ENCODE measurements at regions of chr3 and their contacts with region 1.

Region 1: DNA sequence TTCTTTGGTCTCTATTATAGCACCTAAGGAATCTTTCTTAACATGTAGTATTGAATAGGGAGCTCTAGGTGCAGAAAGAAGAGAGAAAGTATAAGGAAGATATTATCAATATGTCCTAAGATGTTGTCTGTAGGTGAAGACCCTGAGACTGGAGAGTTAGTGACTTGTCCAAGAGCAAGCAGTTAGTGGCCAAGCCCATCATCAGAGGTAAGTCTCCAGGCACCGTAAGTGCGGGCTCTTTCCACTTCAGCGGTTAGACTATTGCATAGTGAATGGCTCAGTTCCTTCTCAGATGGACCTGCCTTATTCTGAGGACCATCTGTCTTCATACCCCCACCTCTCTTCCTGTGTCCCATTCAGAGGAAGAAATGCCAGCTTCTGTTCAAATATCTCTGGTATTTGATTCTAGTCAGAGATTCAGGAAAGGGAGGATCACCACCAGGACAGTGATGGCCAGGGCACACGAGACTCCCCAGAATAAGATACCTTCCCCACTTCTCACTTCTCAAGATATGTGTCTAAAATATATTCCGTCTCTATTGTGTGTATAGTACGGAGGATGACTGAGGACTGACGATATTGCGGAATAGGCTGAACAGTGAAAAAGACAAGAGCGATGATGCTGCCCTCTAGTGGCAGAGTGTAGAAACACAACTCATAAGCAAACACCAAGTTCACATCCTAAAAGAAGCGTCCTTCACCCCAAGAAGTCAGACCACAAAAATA is 19.1 kb upstream of the ADGRG7 start:
- DNase-seq: peak; percentile 30
- ATAC-seq: peak; percentile 89 to 91

Region 2: GRCh38 chr3:99833617-99834205 is 756.6 kb before region 1 on chr3:
- intact Hi-C with region 1: loop called (anchors 2 to 10 kb)
- DNase-seq: no peak
- ATAC-seq: peak in 1 of 2 donors; percentile 19

Region 3: GRCh38 chr3:100316641-100317069 is 273.6 kb before region 1 on chr3:
- intact Hi-C with region 1: loop called in 1 of 2 experiments (anchors 2 kb)
- DNase-seq: peak; percentile 37
- ATAC-seq: peak; percentile 84

Region 4: DNA sequence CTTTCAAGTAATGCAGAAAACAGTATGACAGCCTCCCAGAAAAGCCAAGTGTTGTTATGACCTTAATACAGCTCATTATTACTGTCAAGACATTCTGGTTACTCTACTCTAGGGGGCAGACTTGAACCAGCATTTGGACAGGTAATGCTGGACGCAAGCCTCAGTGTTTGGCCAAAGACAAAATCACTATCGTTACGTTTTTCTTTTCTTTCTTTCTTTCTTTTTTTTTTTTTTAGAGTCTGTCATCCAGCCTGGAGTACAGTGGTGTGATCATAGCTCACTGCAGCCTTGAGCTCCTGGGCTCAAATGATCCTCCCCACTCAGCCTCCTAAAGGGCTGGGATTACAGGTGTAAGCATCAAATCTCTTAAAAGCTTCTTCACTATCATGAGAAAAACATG is 127.3 kb before region 1 on chr3:
- intact Hi-C with region 1: loop called (anchors 2 to 10 kb)
- DNase-seq: no peak
- ATAC-seq: peak; percentile 89 to 90